ENCODE measurements at regions of chr17 and their contacts with region 1.

Region 1: DNA sequence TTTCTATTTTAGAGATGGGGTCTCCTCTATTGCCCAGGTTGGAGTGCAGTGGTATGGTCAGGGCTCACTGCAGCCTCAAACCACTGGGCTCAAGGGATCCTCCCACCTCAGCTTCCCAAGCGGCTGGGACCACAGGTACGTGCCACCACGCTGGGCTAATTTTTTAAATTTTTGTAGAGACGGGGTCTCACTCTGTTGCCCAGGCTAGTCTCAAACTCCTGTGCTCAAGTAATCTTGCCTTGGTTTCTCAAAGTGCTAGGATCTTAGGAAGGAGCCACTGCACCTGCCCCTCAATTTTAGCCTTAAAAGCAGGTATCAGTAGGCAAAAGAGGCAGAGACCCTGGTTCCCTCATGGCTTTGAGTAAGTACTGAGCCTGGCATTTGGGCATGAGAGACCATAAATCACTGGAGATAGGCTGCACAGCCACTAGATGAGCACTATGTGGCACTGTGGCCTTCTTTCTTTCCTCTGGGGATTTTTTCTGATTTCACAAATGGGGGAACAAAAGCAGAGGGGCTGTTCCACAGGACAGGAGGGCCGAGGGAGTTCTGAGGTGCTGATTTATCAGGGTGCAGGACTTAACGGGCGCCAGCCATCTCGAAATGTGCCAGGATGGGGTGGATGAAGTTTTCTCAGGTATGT is 82.2 kb downstream of the PLXDC1 start:
- DNase-seq: no peak
- H3K4me3 ChIP-seq: no peak overlapping the region
- H3K27ac ChIP-seq: no peak overlapping the region
- H3K4me1 ChIP-seq: no peaks in the 10 kb centered on the region
- H3K27me3 ChIP-seq: no peaks in the 10 kb centered on the region
- CTCF ChIP-seq: peak; percentile 23 to 39 (median 34)
- EP300 ChIP-seq: no peak
- POLR2A ChIP-seq: no peak

Region 2: GRCh38 chr17:39144416-39144840 is 75.2 kb after region 1 on chr17:
- intact Hi-C with region 1: loop called (anchors 5 kb)
- DNase-seq: peak; percentile 98
- H3K4me3 ChIP-seq: no peak overlapping the region
- H3K27ac ChIP-seq: peak overlapping the region; percentile 47 to 75 (median 66)
- H3K4me1 ChIP-seq: no peaks in the 10 kb centered on the region
- H3K27me3 ChIP-seq: peaks cover 0 to 3% (median 0%) of the 10 kb centered on the region in 3 donors
- CTCF ChIP-seq: no peak
- EP300 ChIP-seq: no peak
- POLR2A ChIP-seq: no peak

Region 3: DNA sequence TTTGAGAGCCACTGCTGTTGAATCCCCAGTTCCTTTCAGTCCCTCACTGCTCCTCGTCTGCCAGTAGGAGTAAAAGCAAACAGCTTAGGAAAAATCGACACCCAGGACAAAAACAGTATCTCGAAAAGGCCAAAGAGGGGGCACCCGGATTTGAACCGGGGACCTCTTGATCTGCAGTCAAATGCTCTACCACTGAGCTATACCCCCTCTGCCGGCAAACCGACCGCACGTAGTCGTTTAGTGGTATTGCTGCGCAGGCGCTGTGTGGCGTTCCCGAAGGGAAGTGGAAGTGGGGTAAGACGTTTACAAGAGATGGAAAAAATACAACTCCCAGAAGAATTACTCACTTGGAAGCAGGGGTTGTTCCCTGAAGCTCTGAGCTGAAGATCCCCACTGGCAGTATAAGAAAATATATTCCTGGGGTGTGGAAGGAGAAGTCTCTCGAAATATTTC is 84.4 kb after region 1 on chr17:
- intact Hi-C with region 1: loop called (anchors 5 kb)
- DNase-seq: peak; percentile 97
- H3K4me3 ChIP-seq: peak overlapping the region; percentile 64 to 88 (median 74)
- H3K27ac ChIP-seq: peak overlapping the region; percentile 89 to 96 (median 90)
- H3K4me1 ChIP-seq: peaks cover 0 to 28% (median 24%) of the 10 kb centered on the region in 4 donors
- H3K27me3 ChIP-seq: peaks cover 14 to 21% (median 15%) of the 10 kb centered on the region in 3 donors
- CTCF ChIP-seq: peak in 2 of 4 experiments; percentile 17 to 24
- EP300 ChIP-seq: no peak
- POLR2A ChIP-seq: no peak

Measured in sigmoid colon (tissue), 7 donors.